ENCODE measurements at regions of chr2 and their contacts with region 1.

Region 1: GRCh38 chr2:99066075-99066958 is 75.2 kb upstream of the C2orf15 start:
- DNase-seq: peak; percentile 65
- H3K4me3 Mint-ChIP-seq: no peak overlapping the region
- H3K27ac Mint-ChIP-seq: no peak overlapping the region
- H3K4me1 Mint-ChIP-seq: peaks cover 4% of the 10 kb centered on the region
- H3K27me3 Mint-ChIP-seq: no peaks in the 10 kb centered on the region

Region 2: DNA sequence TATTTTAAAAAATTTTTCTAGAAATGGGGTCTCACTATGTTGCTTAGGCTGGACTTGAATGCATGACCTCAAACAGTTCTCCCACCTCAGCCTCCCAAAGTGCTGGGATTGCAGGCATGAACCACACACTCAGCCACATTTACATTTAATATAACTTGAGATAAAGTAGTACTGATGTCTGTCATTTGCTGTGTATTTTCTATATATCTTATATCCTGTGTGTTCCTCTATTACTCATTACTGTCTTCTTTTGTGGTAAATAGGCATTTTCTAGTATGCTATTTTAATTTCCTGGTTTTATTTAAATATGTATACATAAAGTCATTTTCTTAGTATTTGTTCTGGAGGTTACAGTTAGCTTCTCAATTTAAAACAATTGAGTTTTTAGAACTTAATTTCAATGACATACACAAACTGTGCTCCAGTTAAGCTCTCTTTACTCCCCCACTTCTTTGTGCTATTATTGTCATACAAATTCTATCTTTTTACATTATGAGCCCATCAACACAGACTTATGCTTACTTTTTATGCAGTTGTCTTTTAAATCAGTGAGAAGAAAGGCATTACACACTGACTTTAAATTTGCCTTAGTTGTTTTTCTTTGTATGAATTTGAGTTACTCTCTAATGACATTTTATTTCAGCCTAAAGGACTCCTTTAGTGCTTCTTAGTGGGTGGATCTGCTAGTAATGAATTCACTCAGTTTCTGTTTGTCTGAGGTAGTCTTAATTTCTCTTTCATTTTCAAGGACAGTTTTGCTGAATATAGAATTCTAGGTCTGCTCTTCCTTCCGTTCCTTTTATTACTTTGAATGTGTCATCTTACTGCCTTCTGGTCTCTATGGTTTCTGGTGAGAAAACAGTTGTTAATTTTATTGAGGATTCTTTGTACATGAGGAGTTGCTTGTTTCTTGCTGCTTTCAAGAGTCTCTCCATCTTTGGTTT is 627.9 kb before region 1 on chr2:
- CTCF ChIA-PET with region 1: no interaction called
- intact Hi-C with region 1: loop called (anchors 10 kb)
- DNase-seq: no peak
- H3K4me3 Mint-ChIP-seq: no peak overlapping the region
- H3K27ac Mint-ChIP-seq: peak overlapping the region; percentile 73
- H3K4me1 Mint-ChIP-seq: peaks cover 19% of the 10 kb centered on the region
- H3K27me3 Mint-ChIP-seq: no peaks in the 10 kb centered on the region

Region 3: GRCh38 chr2:98568881-98569793 is 497.2 kb before region 1 on chr2:
- CTCF ChIA-PET with region 1: interaction called, 3 read pairs
- intact Hi-C with region 1: loop called (anchors 1 kb)
- DNase-seq: peak; percentile 84
- H3K4me3 Mint-ChIP-seq: no peak overlapping the region
- H3K27ac Mint-ChIP-seq: no peak overlapping the region
- H3K4me1 Mint-ChIP-seq: no peaks in the 10 kb centered on the region
- H3K27me3 Mint-ChIP-seq: no peaks in the 10 kb centered on the region

Region 4: GRCh38 chr2:98649135-98649991 is 417.0 kb before region 1 on chr2:
- CTCF ChIA-PET with region 1: interaction called, 4 read pairs
- intact Hi-C with region 1: loop called (anchors 1 kb)
- DNase-seq: peak; percentile 92
- H3K4me3 Mint-ChIP-seq: no peak overlapping the region
- H3K27ac Mint-ChIP-seq: peak overlapping the region; percentile 83
- H3K4me1 Mint-ChIP-seq: peaks cover 56% of the 10 kb centered on the region
- H3K27me3 Mint-ChIP-seq: no peaks in the 10 kb centered on the region

Region 5: GRCh38 chr2:98936353-98937351 is 129.7 kb before region 1 on chr2:
- CTCF ChIA-PET with region 1: interaction called, 7 read pairs
- intact Hi-C with region 1: loop called (anchors 1 kb)
- DNase-seq: peak; percentile 59
- H3K4me3 Mint-ChIP-seq: peak overlapping the region; percentile 69
- H3K27ac Mint-ChIP-seq: no peak overlapping the region
- H3K4me1 Mint-ChIP-seq: peaks cover 8% of the 10 kb centered on the region
- H3K27me3 Mint-ChIP-seq: peaks cover 41% of the 10 kb centered on the region

Region 6: GRCh38 chr2:99141110-99142108 is 75.1 kb after region 1 on chr2 and contains the start of gene C2orf15:
- CTCF ChIA-PET with region 1: no interaction called
- intact Hi-C with region 1: loop called (anchors 1 kb)
- DNase-seq: peak; percentile 96
- H3K4me3 Mint-ChIP-seq: peak within 1 kb of the TSS; percentile 93
- H3K27ac Mint-ChIP-seq: peak within 1 kb of the TSS; percentile 86
- H3K4me1 Mint-ChIP-seq: peaks cover 17% of the 10 kb centered on the region
- H3K27me3 Mint-ChIP-seq: no peaks in the 10 kb centered on the region
- total RNA-seq, gene C2orf15: 1.4 to 1.6 TPM

Measured in activated naive CD4-positive, alpha-beta T cell treated with anti-CD3 and anti-CD28 coated beads for 36 hours (primary cell).